Activated CD8-positive, alpha-beta memory T cell treated with anti-CD3 and anti-CD28 coated beads, Interleukin-2, amount 10 ng/mL, durations not matched to agents 7 days and 5 days (primary cell): ENCODE measurements at regions of chr7 and their contacts with region 1.

Region 1: DNA sequence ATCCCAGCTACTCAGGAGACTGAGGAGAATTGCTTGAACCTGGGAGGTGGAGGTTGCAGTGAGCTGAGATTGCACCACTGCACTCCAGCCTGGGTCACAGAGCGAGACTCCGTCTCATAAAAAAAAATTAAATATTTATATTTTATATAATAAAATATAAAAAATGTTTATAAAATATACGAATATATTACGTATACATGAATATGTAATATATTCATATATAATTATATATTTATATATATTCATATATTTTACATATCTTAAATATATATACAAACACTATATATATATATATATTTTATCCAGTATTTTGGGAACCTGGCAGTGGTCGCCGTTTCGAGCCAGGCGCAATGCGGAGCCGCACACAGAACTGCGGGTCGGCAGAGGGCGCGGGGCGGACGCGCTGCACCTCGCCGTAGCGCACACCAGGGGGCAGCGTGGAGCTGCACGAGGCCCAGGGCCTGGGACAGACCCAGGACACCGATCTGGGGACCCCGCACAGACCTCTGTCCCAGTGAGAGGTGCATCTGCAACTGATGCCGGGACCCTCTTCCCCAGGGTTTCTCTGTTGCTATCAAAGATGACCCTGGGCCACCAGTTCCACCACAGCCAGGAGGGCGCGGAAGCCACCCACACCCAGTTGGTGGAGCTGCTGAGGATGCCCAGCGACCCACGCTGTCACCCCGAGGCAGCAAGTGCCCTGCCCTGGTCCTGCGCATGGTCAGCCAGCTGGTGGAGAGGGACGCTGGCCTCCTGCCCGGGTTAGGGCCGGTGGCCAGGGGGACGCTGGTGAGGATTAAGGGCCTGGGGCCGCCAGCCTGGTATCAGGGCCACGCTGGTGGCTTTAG is 22.7 kb downstream of the AP5Z1 start:
- DNase-seq: peak; percentile 65
- ATAC-seq: peak; percentile 89
- H3K4me3 Mint-ChIP-seq: no peak overlapping the region
- H3K27ac Mint-ChIP-seq: no peak overlapping the region
- H3K4me1 Mint-ChIP-seq: peaks cover 2% of the 10 kb centered on the region
- H3K27me3 Mint-ChIP-seq: no peaks in the 10 kb centered on the region

Region 2: GRCh38 chr7:4809091-4809591 is 11.1 kb after region 1 on chr7:
- CTCF ChIA-PET with region 1: interaction called, 16 read pairs
- DNase-seq: no peak
- ATAC-seq: peak; percentile 30
- H3K4me3 Mint-ChIP-seq: peak overlapping the region; percentile 26
- H3K27ac Mint-ChIP-seq: no peak overlapping the region
- H3K4me1 Mint-ChIP-seq: peaks cover 7% of the 10 kb centered on the region
- H3K27me3 Mint-ChIP-seq: peaks cover 37% of the 10 kb centered on the region

Region 3: DNA sequence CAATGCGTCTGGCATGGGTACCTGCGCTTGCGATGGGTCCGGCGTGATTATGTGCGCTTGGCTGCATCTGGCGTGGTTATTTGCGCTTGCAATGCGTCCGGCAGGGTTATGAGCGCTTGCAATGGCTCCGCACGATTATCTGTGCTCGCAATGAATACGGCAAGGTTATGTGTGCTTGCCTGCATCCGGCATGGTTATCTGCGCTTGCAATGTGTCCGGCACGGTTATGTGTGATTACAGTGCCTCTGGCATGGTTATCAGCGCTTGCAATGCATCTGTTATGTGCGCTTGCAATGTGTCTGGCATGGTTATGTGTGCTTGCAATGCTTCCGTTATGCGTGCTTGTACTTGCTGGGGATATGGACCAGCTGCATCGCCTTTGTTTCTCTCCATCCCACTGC is 285.2 kb after region 1 on chr7:
- CTCF ChIA-PET with region 1: interaction called, 49 read pairs
- DNase-seq: no peak
- ATAC-seq: no peak
- H3K4me3 Mint-ChIP-seq: no peak overlapping the region
- H3K27ac Mint-ChIP-seq: no peak overlapping the region
- H3K4me1 Mint-ChIP-seq: peaks cover 2% of the 10 kb centered on the region
- H3K27me3 Mint-ChIP-seq: peaks cover 5% of the 10 kb centered on the region